ENCODE measurements at regions of chr16 and their contacts with region 1.

Region 1: DNA sequence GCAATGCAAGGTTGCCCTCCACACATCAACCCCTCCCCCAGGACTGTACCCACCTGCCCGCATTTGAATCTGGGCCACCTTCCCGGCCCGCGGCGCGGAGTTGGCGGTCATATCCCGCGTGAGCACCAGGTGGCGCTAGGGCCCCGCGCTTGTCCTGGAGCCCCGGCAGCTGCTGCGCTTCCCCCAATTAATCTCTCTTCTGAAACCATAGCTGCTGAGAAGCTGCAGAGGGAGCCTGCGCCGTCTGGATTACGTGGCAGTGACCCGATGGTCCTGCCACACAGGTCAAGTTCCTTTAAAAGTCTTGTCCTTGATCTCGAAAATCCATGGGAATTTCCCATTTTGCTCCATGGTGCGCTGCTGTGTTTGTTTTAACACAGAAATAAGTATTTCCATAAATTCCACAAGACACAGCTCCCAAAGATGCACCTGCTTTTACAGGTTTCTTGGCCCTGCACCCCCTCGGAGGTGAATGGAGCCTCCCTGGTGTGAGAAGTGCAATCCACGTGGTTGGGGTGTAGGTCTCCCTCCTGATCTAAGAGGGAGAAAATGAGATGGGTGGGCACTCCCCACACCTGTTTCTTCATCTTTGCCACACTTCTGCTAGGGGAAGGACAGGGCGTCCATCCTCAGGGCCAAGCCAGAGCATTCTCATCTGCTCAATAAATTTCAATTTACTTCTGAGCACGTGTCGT is 22.1 kb downstream of the COX4I1 start:
- DNase-seq: peak; percentile 92
- ATAC-seq: peak; percentile 86

Region 2: GRCh38 chr16:85799497-85800337 is 21.9 kb before region 1 on chr16 and contains the starts of genes COX4I1 and EMC8:
- intact Hi-C with region 1: no loop called
- DNase-seq: peak; percentile 98
- ATAC-seq: peak; percentile 98
- total RNA-seq, gene COX4I1: 2,129 TPM
- total RNA-seq, gene EMC8: 25.8 TPM

Region 3: DNA sequence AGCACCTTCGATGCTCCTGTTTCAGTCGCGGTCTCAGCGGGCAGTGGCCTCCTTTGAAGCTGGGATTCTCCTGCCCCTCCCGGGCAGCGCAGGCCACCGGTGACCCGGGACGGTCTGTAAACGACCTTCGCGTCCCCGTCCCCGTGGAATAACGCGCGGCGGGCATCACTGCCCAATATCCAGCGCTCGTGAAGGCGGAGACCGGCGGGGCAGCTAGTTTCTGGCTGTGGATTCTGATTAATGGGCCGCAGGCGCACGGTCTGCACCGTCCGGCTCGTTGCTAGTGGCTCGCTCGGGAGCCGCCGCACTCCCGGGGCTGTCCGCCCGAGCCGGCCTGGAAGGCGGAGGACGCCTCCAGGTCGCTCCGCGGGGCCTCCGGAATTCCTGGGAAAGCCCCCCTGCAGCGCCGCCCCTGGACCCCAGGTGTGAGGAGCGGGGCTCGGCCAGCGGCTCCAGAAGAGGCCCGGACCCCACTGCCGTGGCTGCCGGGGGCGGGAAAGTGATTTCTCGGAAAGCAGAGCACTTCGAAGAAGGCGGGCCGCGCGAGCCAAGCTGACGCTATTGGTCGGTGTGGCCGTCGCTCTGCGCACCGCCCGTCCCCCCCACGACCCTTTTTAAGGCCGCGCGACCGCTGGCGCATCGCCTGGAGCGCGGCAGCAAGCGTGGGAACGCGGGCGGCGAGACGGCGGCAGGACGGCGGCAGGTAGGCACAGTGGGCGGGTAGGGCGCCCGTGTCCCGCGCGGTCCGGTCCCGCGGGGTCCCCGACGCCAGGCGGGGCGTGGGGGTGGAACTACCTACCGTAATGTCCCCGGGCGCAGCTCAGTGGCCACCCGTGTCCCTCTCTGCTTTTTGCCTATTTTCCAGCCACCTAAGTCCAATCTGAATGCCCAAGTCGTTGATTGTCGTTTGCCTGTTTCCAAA is 77.2 kb after region 1 on chr16 and contains the start of gene IRF8:
- intact Hi-C with region 1: loop called (anchors 5 kb)
- DNase-seq: peak; percentile 88
- ATAC-seq: peak; percentile 79
- total RNA-seq, gene IRF8: 3.3 TPM

Region 4: GRCh38 chr16:85986931-85987749 is 165.6 kb after region 1 on chr16:
- intact Hi-C with region 1: loop called (anchors 1 kb)
- DNase-seq: no peak
- ATAC-seq: no peak

Region 5: GRCh38 chr16:86016201-86016871 is 194.7 kb after region 1 on chr16:
- intact Hi-C with region 1: loop called (anchors 1 kb)
- DNase-seq: no peak
- ATAC-seq: peak; percentile 32

Region 6: DNA sequence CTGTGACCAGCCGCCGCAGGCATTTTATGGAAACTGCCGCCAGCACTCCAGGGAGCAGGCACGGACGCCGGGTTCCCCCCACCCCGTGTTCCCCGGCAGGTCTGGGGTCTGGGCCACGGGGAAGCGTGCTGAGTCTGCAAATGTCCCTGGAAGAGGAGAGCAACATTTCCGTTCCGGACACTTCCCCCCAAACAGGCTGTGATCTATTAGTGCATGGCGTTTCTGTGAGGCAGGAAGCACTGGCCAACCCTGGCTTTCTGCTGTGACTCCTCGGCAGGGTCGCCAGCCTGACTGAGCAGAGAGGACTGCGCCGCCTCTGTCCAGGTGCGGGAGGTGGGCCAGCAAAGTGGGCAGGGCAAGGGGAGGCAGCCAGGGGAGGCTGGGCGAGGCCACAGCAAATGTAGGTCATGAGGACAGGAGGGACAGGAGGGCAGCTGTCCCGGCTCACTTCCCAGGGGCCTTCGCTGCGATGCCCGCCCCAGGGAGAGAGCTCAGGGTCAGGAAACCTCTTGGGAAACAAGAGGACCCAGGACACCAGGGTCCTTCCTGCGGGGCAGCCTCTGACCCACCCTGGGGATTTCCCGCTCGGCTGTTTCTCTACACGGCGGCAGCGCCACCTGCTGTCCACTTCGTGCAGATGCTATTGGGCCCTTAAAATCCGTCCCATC is 698.2 kb after region 1 on chr16:
- intact Hi-C with region 1: loop called (anchors 5 kb)
- DNase-seq: peak; percentile 84
- ATAC-seq: peak; percentile 44